ENCODE measurements at regions of chr7 and their contacts with region 1.

Region 1: DNA sequence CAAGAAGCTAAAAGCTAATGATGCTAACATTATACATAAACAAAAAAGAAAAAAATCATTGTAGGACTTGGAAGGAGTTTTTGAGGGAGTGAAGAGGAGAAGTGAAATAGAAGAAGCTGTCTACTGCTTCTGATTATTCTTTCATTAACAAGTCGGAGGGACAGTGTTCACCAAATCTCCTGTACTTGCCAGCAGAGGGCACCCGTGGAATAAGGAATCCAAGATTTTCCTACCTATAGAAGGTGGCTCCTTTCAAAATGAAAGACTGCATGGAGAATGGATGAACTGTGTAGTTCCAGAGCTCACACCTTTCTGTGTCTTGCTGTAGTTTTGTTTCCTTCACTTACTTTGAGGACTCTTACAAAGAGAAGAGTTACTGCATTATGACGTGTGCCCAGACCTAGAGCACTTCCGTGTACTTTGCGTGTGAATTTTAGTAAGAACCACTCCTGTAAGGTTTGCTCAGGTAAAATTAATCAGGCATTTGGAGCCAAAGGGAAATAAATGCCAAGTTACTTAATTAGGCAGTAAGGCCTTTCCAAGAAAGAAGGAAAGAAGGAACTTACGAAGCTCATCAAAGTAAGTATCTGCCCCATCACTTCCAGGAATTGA is 145.1 kb downstream of the SEMA3D start:
- ATAC-seq: peak; percentile 42 to 92 (median 74)
- H3K4me3 ChIP-seq: no peak overlapping the region
- H3K27ac ChIP-seq: no peak overlapping the region
- H3K4me1 ChIP-seq: peaks cover 0 to 5% of the 10 kb centered on the region in 2 donors

Region 2: GRCh38 chr7:85464042-85464651 is 422.4 kb after region 1 on chr7:
- in situ Hi-C with region 1: loop called in 2 of 9 experiments (anchors 10 to 25 kb)
- ATAC-seq: no peak
- H3K4me3 ChIP-seq: no peak overlapping the region
- H3K27ac ChIP-seq: no peak overlapping the region
- H3K4me1 ChIP-seq: no peaks in the 10 kb centered on the region

Region 3: DNA sequence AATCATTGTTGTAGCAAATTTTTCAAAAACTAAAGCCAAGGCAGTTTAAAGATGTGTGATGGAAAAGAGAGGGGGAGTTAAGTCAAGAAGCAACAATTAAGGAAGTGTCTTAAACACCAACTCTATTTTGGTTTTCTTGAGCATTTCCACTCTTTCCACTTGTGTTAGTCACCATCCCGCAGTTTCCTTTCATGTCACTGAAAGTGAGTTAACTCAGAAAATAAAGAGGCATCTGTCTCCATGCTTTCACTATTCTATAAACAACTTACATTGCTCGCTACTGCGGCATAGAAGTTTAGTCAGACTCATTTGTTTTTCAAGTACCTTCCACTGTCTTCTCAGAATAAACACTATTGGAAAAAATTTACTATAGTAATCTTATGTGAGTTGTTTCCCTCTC is 430.0 kb after region 1 on chr7:
- in situ Hi-C with region 1: loop called in 2 of 9 experiments (anchors 10 to 25 kb)
- ATAC-seq: no peak
- H3K4me3 ChIP-seq: no peak overlapping the region
- H3K27ac ChIP-seq: no peak overlapping the region
- H3K4me1 ChIP-seq: peaks cover 0 to 4% of the 10 kb centered on the region in 2 donors

Region 4: GRCh38 chr7:85508642-85509410 is 467.1 kb after region 1 on chr7:
- in situ Hi-C with region 1: no loop called
- ATAC-seq: peak in 2 of 8 experiments; percentile 44 to 76
- H3K4me3 ChIP-seq: no peak overlapping the region
- H3K27ac ChIP-seq: no peak overlapping the region
- H3K4me1 ChIP-seq: peaks cover 0 to 4% of the 10 kb centered on the region in 2 donors

Region 5: GRCh38 chr7:85554236-85555178 is 512.8 kb after region 1 on chr7:
- in situ Hi-C with region 1: loop called in 5 of 9 experiments (anchors 10 to 25 kb)
- ATAC-seq: peak in 7 of 8 experiments; percentile 34 to 63 (median 52)
- H3K4me3 ChIP-seq: no peak overlapping the region
- H3K27ac ChIP-seq: no peak overlapping the region
- H3K4me1 ChIP-seq: no peaks in the 10 kb centered on the region

Region 6: GRCh38 chr7:85829817-85830432 is 788.2 kb after region 1 on chr7:
- in situ Hi-C with region 1: loop called in 7 of 9 experiments (anchors 10 to 25 kb)
- ATAC-seq: peak in 6 of 8 experiments; percentile 33 to 79 (median 56)
- H3K4me3 ChIP-seq: no peak overlapping the region
- H3K27ac ChIP-seq: no peak overlapping the region
- H3K4me1 ChIP-seq: no peaks in the 10 kb centered on the region

Measured in motor neuron (in vitro differentiated cells).